Activated T-helper 2 cell treated with anti-CD3 and anti-CD28 coated beads, Interferon-gamma antibody, Interleukin-2, Interleukin-4, amounts not matched to agents 10 μg/mL and 5 μg/mL and 100 μg/mL, durations not matched to agents 14 hours and 24 hours and 36 hours (primary cell): ENCODE measurements at regions of chr3 and their contacts with region 1.

Region 1: DNA sequence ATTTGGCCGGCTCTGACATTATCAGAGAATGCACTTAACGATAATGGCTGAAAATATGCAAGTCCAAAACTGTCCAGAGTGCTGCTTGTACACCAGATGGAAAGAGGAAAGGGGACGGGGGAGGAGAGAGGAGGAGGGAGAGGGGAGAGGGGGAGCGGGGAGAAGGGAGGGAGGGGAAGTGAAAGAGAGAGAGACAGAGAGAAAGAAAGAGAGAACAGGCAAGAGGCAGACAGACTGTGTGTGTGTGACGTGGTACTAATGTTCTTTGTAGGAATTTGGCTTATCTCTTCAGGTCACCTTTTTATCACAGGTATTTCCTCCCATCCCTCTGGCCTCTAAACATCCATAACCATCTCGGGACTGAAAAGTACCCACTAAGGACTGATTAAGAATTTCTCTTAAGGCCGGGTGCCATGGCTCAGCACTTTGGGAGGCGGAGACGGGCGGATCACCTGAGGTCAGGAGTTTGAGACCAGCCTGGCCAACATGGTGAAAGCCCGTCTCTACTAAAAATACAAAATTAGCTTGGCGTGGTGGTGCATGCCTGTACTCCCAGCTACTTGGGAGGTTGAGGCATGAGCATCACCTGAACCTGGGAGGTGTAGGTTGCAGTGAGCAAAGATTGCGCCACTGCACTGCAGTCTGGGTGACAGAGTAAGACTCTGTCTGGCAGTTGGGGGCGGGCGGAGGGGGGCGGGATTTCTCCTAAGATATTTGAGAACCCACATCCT is 75.2 kb upstream of the LMOD3 start:
- DNase-seq: no peak
- H3K4me3 Mint-ChIP-seq: peak overlapping the region; percentile 90
- H3K27ac Mint-ChIP-seq: peak overlapping the region; percentile 91
- H3K4me1 Mint-ChIP-seq: peaks cover 45% of the 10 kb centered on the region
- H3K27me3 Mint-ChIP-seq: no peaks in the 10 kb centered on the region

Region 2: DNA sequence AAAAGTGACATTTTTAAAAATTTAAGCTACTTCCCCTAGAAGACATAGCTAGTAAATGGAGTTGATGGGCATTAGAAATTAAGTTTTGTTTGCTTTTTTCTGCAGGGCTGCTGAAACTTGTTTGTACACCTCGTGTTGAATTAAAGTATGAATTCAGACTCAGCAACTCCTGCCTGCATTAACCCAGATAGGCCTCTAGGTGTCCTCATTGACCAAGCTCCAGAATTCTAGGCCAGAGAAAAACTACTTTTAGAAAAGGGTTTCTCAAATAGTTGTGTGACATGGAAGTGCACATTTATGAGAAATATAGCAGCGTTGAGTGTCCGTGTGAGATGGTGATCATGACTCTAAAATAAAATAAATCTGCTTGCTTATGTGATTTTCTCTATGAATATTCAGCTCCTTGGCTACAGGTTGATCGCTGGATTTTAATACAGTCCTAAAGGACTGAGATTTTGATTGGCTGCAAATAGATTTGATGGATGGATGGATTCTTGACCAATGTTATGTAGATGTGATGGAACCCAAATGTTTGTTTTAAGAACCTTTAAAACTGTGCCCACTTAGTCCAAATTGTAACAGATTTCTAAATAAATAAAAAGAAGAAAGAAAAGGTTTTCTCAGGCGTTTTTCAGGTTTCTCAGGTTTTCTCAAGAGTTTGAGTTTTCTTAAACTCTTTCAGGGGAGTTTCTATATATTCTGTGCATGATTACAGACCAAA is 35.9 kb before region 1 on chr3:
- intact Hi-C with region 1: loop called (anchors 5 kb)
- DNase-seq: peak; percentile 13
- H3K4me3 Mint-ChIP-seq: no peak overlapping the region
- H3K27ac Mint-ChIP-seq: no peak overlapping the region
- H3K4me1 Mint-ChIP-seq: peaks cover 15% of the 10 kb centered on the region
- H3K27me3 Mint-ChIP-seq: peaks cover 7% of the 10 kb centered on the region

Region 3: DNA sequence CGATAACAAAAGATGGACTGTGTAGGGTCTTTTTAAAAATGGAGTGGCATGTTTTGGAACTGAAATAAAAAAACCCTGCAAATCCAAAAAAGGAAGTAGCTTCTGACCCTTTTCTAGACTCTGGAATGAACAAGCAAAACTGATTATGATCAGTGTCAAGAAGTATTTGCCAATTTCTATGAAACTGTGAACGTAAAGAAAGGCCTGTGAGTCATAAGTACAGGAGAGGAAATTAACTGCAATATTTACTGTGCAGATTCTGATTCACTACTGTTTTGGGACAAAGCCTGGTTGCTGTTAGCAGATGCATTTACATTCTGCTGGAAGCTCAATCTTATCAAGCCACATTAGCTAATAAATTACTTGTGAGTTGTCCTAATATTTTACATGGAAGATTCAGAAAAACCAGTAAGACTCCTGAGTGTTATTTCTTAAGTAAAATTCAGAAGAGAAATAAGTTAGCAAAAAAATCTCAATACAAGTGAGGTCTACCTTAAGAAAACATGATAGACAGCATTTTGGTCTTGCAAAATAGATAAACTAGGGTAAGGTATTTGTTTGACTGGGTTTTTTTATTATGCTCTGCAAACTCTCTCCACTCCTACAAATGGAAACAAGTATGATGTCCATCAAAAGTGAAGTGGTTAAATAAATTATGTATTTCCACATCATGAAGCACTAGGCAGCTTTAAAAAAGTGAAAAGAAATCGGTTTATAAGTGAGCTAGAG is 15.0 kb after region 1 on chr3:
- intact Hi-C with region 1: loop called (anchors 1 kb)
- DNase-seq: no peak
- H3K4me3 Mint-ChIP-seq: peak overlapping the region; percentile 26
- H3K27ac Mint-ChIP-seq: peak overlapping the region; percentile 89
- H3K4me1 Mint-ChIP-seq: peaks cover 49% of the 10 kb centered on the region
- H3K27me3 Mint-ChIP-seq: no peaks in the 10 kb centered on the region

Region 4: GRCh38 chr3:69250014-69250413 is 52.4 kb after region 1 on chr3:
- intact Hi-C with region 1: loop called (anchors 1 kb)
- DNase-seq: peak; percentile 58
- H3K4me3 Mint-ChIP-seq: peak overlapping the region; percentile 74
- H3K27ac Mint-ChIP-seq: peak overlapping the region; percentile 58
- H3K4me1 Mint-ChIP-seq: peaks cover 12% of the 10 kb centered on the region
- H3K27me3 Mint-ChIP-seq: peaks cover 8% of the 10 kb centered on the region

Region 5: GRCh38 chr3:69288161-69288895 is 90.7 kb after region 1 on chr3:
- intact Hi-C with region 1: loop called (anchors 1 kb)
- DNase-seq: no peak
- H3K4me3 Mint-ChIP-seq: peak overlapping the region; percentile 20
- H3K27ac Mint-ChIP-seq: peak overlapping the region; percentile 53
- H3K4me1 Mint-ChIP-seq: peaks cover 30% of the 10 kb centered on the region
- H3K27me3 Mint-ChIP-seq: no peaks in the 10 kb centered on the region

Region 6: GRCh38 chr3:69324362-69325025 is 126.9 kb after region 1 on chr3:
- intact Hi-C with region 1: loop called (anchors 1 kb)
- DNase-seq: no peak
- H3K4me3 Mint-ChIP-seq: no peak overlapping the region
- H3K27ac Mint-ChIP-seq: peak overlapping the region; percentile 72
- H3K4me1 Mint-ChIP-seq: peaks cover 52% of the 10 kb centered on the region
- H3K27me3 Mint-ChIP-seq: no peaks in the 10 kb centered on the region